CD8-positive, alpha-beta memory T cell (primary cell): ENCODE measurements at regions of chr3 and their contacts with region 1.

Region 1: DNA sequence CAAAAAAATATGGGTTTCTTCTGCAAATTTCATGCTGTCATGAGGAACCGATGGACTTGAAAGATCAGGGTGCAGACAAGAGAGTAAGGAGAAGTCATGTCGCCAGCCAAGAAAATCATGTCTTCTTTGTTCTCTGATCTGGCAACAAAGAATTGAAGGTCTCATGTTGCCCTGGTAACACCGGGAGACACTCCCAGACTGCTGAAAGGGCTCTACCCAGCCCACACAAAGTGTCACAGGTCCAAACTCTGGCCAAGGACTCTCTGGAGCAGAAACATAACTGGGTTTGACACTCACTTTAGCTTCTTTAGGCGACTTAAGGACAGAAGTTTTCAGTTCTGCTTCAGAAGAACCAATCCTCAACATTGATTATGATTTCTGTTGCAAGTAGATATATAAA is 42.9 kb downstream of the SIDT1 start:
- DNase-seq: no peak
- H3K4me3 ChIP-seq: no peak overlapping the region
- H3K4me3 Mint-ChIP-seq: no peak overlapping the region
- H3K27ac ChIP-seq: no peak overlapping the region
- H3K27ac Mint-ChIP-seq: peak overlapping the region in 5 of 8 donors; percentile 48 to 94 (median 85)
- H3K4me1 ChIP-seq: no peaks in the 10 kb centered on the region
- H3K4me1 Mint-ChIP-seq: peaks cover 4 to 11% (median 5%) of the 10 kb centered on the region in 3 donors
- H3K27me3 ChIP-seq: no peaks in the 10 kb centered on the region
- H3K27me3 Mint-ChIP-seq: no peaks in the 10 kb centered on the region

Region 2: GRCh38 chr3:113495035-113495434 is 80.2 kb before region 1 on chr3:
- CTCF ChIA-PET with region 1: interaction called, 74 read pairs
- POLR2A ChIA-PET with region 1: no interaction called
- DNase-seq: peak in 4 of 5 donors; percentile 6 to 64 (median 39)
- H3K4me3 ChIP-seq: no peak overlapping the region
- H3K4me3 Mint-ChIP-seq: no peak overlapping the region
- H3K27ac ChIP-seq: no peak overlapping the region
- H3K27ac Mint-ChIP-seq: peak overlapping the region in 2 of 8 donors; percentile 35 to 40
- H3K4me1 ChIP-seq: no peaks in the 10 kb centered on the region
- H3K4me1 Mint-ChIP-seq: peaks cover 1 to 7% (median 5%) of the 10 kb centered on the region in 3 donors
- H3K27me3 ChIP-seq: no peaks in the 10 kb centered on the region
- H3K27me3 Mint-ChIP-seq: no peaks in the 10 kb centered on the region

Region 3: GRCh38 chr3:113514265-113514769 is 60.9 kb before region 1 on chr3:
- CTCF ChIA-PET with region 1: interaction called, 28 read pairs
- POLR2A ChIA-PET with region 1: no interaction called
- DNase-seq: no peak
- H3K4me3 ChIP-seq: peak overlapping the region; percentile 99
- H3K4me3 Mint-ChIP-seq: no peak overlapping the region
- H3K27ac ChIP-seq: peak overlapping the region; percentile 90
- H3K27ac Mint-ChIP-seq: no peak overlapping the region
- H3K4me1 ChIP-seq: peaks cover 11% of the 10 kb centered on the region
- H3K4me1 Mint-ChIP-seq: peaks cover 8 to 20% (median 10%) of the 10 kb centered on the region in 3 donors
- H3K27me3 ChIP-seq: no peaks in the 10 kb centered on the region
- H3K27me3 Mint-ChIP-seq: peaks cover 20% of the 10 kb centered on the region in 2 donors

Region 4: GRCh38 chr3:113531826-113532697 is 43.1 kb before region 1 on chr3 and contains the start of gene SIDT1:
- CTCF ChIA-PET with region 1: interaction called, 15 read pairs
- POLR2A ChIA-PET with region 1: no interaction called
- DNase-seq: peak; percentile 52 to 83 (median 76)
- H3K4me3 ChIP-seq: peak within 1 kb of the TSS; percentile 94
- H3K4me3 Mint-ChIP-seq: peak within 1 kb of the TSS; percentile 96 to 100 (median 99)
- H3K27ac ChIP-seq: peak within 1 kb of the TSS; percentile 93
- H3K27ac Mint-ChIP-seq: peak within 1 kb of the TSS; percentile 97 to 100 (median 100)
- H3K4me1 ChIP-seq: peaks cover 42% of the 10 kb centered on the region
- H3K4me1 Mint-ChIP-seq: peaks cover 49 to 53% (median 49%) of the 10 kb centered on the region in 3 donors
- H3K27me3 ChIP-seq: no peaks in the 10 kb centered on the region
- H3K27me3 Mint-ChIP-seq: no peaks in the 10 kb centered on the region
- total RNA-seq, gene SIDT1: 14.8 to 16.6 TPM

Region 5: DNA sequence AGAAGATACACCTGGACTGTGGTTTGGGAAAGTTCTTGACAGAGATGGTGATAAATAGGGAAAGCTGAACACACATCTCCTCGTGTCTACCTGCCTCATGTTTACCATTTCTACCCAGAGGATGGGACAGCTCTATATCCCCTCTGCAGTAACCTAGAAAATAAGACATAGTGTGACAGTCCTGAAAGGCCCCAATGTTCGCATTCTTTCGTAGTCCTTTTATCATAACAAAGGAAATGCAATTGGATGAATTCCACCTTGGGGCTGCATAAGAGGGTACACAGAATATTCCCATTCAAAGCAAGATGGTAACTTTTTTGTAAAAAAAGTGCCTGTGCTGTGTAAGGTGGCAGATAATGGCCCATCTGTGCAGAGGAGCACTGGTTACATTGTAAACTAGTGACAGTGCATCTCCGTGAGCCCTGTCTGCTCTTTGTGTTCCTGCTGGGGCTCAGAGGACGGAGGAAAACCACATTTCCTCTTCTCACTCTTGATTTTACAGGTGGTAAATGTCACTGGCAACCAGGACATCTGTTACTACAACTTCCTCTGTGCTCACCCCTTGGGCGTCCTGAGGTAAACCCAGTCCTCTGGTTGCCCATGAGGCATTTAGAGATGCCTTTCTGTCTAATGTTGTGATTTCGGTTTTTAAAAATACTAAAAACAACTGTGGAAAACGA is 31.5 kb after region 1 on chr3:
- CTCF ChIA-PET with region 1: interaction called, 10 read pairs
- POLR2A ChIA-PET with region 1: no interaction called
- DNase-seq: peak; percentile 3 to 55 (median 33)
- H3K4me3 ChIP-seq: no peak overlapping the region
- H3K4me3 Mint-ChIP-seq: peak overlapping the region in 5 of 7 donors; percentile 30 to 69 (median 45)
- H3K27ac ChIP-seq: no peak overlapping the region
- H3K27ac Mint-ChIP-seq: peak overlapping the region in 6 of 8 donors; percentile 0 to 82 (median 70)
- H3K4me1 ChIP-seq: peaks cover 20% of the 10 kb centered on the region
- H3K4me1 Mint-ChIP-seq: peaks cover 22 to 34% (median 25%) of the 10 kb centered on the region in 3 donors
- H3K27me3 ChIP-seq: no peaks in the 10 kb centered on the region
- H3K27me3 Mint-ChIP-seq: peaks cover 0 to under 1% of the 10 kb centered on the region in 2 donors

Region 6: DNA sequence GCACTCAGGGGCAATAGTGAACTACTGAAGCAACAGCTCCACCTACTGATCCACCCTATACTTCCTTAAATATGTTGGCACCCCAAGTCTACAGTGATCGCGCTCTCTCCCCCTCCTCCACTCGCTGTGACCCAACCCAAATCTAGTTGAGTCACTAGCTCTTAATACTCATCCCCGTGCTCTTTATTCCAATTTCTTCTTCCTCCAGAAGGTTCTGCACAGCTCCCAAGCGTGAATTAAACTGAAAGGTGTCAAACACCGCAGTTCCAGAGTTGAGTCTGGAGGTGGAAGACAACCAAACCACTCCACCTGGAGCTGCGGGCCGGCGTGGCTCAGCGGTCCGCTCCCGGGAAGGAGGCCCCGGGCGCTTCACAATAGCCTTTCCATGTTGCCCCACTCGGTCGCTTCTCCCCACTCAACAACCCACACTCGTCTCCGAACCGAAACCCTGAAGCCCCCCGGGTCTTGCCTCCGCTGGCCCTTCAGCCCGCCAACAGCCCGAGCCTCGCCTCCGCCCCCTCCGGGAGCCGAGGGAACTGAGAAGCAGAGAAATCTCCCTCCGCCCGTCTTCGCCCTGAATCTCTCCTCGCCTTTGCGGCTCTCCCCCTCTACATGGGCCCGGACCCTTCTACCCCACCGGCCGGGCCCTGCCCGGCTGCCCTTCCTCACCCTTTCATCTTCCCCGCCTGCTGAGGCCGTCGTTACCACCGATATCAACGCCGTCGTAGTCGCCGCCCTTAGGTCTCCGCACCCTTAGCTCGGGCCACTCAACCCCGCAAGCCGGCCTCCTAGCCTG is 170.3 kb after region 1 on chr3:
- CTCF ChIA-PET with region 1: interaction called, 13 read pairs
- POLR2A ChIA-PET with region 1: no interaction called
- DNase-seq: peak; percentile 66 to 87 (median 81)
- H3K4me3 ChIP-seq: peak overlapping the region; percentile 78
- H3K4me3 Mint-ChIP-seq: peak overlapping the region; percentile 92 to 100 (median 98)
- H3K27ac ChIP-seq: peak overlapping the region; percentile 99
- H3K27ac Mint-ChIP-seq: peak overlapping the region; percentile 100
- H3K4me1 ChIP-seq: peaks cover 47% of the 10 kb centered on the region
- H3K4me1 Mint-ChIP-seq: peaks cover 62 to 81% (median 78%) of the 10 kb centered on the region in 3 donors
- H3K27me3 ChIP-seq: no peaks in the 10 kb centered on the region
- H3K27me3 Mint-ChIP-seq: peaks cover 0 to 8% of the 10 kb centered on the region in 2 donors